ENCODE measurements at regions of chr20 and their contacts with region 1.

Region 1: DNA sequence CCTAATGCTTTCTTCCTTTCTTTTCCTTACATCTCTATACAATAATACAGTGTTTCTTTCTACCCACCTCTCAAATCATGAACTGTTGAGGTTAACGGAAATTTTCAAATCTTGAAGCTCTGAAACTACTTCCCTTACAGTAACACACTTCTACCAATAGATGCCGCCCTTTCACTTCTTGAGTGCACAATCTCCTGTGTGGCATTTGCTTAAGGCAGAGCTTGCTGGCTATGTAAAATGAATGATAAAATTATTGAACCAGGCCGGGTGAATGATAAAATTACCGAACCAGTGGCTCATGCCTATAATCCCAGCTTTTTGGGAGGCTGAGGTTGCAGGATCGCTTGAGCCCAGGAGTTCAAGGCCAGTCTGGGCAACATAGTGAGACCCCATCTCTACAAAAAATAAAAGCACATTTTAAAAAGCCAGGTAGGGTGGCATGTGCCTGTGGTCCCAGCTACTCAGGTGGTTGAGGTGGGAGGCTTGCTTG is 56.8 kb downstream of the KCNS1 start:
- DNase-seq: peak; percentile 55
- H3K4me3 ChIP-seq: no peak overlapping the region
- H3K27ac ChIP-seq: no peak overlapping the region
- H3K27me3 ChIP-seq: no peaks in the 10 kb centered on the region
- CTCF ChIP-seq: peak; percentile 94

Region 2: GRCh38 chr20:45020236-45020886 is 23.8 kb before region 1 on chr20:
- CTCF ChIA-PET with region 1: interaction called, 16 read pairs
- POLR2A ChIA-PET with region 1: no interaction called
- DNase-seq: no peak
- H3K4me3 ChIP-seq: no peak overlapping the region
- H3K27ac ChIP-seq: no peak overlapping the region
- H3K27me3 ChIP-seq: no peaks in the 10 kb centered on the region
- CTCF ChIP-seq: no peak

Region 3: GRCh38 chr20:45059022-45059728 is 15.0 kb after region 1 on chr20:
- CTCF ChIA-PET with region 1: interaction called, 69 read pairs
- POLR2A ChIA-PET with region 1: interaction called, 3 read pairs
- DNase-seq: no peak
- H3K4me3 ChIP-seq: no peak overlapping the region
- H3K27ac ChIP-seq: no peak overlapping the region
- H3K27me3 ChIP-seq: no peaks in the 10 kb centered on the region
- CTCF ChIP-seq: no peak

Region 4: GRCh38 chr20:45080867-45081624 is 36.9 kb after region 1 on chr20:
- CTCF ChIA-PET with region 1: interaction called, 10 read pairs
- POLR2A ChIA-PET with region 1: no interaction called
- DNase-seq: no peak
- H3K4me3 ChIP-seq: no peak overlapping the region
- H3K27ac ChIP-seq: no peak overlapping the region
- H3K27me3 ChIP-seq: no peaks in the 10 kb centered on the region
- CTCF ChIP-seq: peak; percentile 66

Region 5: GRCh38 chr20:45111799-45112471 is 67.8 kb after region 1 on chr20:
- CTCF ChIA-PET with region 1: interaction called, 62 read pairs
- POLR2A ChIA-PET with region 1: no interaction called
- DNase-seq: no peak
- H3K4me3 ChIP-seq: no peak overlapping the region
- H3K27ac ChIP-seq: no peak overlapping the region
- H3K27me3 ChIP-seq: peaks cover 8% of the 10 kb centered on the region
- CTCF ChIP-seq: peak; percentile 51; the same call in 1 of the 2 replicates